A673 (cell line): ENCODE measurements at regions of chr4 and their contacts with region 1.

Region 1: DNA sequence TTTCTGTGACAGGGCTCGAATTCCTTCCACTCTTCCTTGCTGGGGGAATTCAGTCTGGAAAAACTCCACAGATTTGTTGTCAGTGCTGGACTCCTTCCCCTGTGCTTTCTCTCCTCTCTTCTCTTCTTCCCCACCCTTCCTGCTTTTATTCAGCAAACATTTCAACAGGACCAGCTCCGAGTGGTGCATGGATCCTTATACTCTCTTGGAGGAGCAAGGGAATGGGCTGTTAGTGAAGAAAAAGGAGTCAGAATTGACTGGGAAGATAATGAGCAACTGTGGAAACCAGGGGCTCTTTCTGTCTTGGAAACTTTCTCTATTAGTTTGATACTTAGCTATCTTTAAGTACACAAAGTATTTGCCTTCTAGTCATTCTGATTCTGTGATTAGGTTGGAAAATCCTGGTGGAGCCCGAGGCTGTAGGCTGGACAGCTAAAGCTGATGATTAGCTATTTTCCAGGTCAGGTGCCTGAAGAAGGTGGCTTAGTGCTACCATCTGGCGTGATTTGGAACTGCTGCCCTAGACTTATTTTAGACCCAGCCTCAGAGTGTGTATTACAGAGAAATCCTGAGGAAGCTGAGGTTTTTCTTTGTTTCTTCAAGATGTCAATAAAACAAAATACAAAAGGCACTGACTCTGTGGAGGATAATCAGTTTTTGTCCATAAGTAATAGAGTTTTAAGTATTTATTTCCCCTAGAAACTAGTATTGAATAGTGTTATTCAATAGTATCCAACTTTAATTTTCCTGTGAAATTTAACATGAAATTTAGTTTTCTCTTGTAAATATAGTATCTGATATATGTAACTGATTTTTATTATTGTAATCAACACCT is 38.4 kb downstream of the NAP1L5 start:
- DNase-seq: peak; percentile 32
- H3K4me3 ChIP-seq: no peak overlapping the region
- H3K27ac ChIP-seq: no peak overlapping the region
- H3K4me1 ChIP-seq: no peaks in the 10 kb centered on the region
- H3K27me3 ChIP-seq: no peaks in the 10 kb centered on the region
- CTCF ChIP-seq: peak; percentile 63

Region 2: GRCh38 chr4:88526221-88526815 is 133.0 kb before region 1 on chr4:
- CTCF ChIA-PET with region 1: interaction called, 4 read pairs
- POLR2A ChIA-PET with region 1: no interaction called
- intact Hi-C with region 1: loop called (anchors 2 kb)
- DNase-seq: peak; percentile 14
- H3K4me3 ChIP-seq: no peak overlapping the region
- H3K27ac ChIP-seq: no peak overlapping the region
- H3K4me1 ChIP-seq: no peaks in the 10 kb centered on the region
- H3K27me3 ChIP-seq: no peaks in the 10 kb centered on the region
- CTCF ChIP-seq: peak; percentile 43; the same call in 1 of the 2 replicates

Region 3: GRCh38 chr4:88533937-88534750 is 125.1 kb before region 1 on chr4:
- CTCF ChIA-PET with region 1: interaction called, 11 read pairs
- POLR2A ChIA-PET with region 1: no interaction called
- intact Hi-C with region 1: no loop called
- DNase-seq: peak; percentile 57
- H3K4me3 ChIP-seq: no peak overlapping the region
- H3K27ac ChIP-seq: no peak overlapping the region
- H3K4me1 ChIP-seq: no peaks in the 10 kb centered on the region
- H3K27me3 ChIP-seq: no peaks in the 10 kb centered on the region
- CTCF ChIP-seq: no peak